H1 (cell line): ENCODE measurements at regions of chr11 and their contacts with region 1.

Region 1: GRCh38 chr11:113532697-113533424 is 57.7 kb upstream of the DRD2 start:
- DNase-seq: peak; percentile 44 to 91
- H3K4me3 ChIP-seq: no peak overlapping the region
- H3K27ac ChIP-seq: no peak overlapping the region
- H3K4me1 ChIP-seq: peaks cover 0 to under 1% (median 0%) of the 10 kb centered on the region in 4 experiments; a peak in 2 of 7 replicates
- H3K27me3 ChIP-seq: no peaks in the 10 kb centered on the region; a peak in 1 of 7 replicates
- CTCF ChIP-seq: peak; percentile 77 to 83 (median 78)
- EP300 ChIP-seq: no peak
- POLR2A ChIP-seq: no peak
- RAD21 ChIP-seq: peak; percentile 90

Region 2: DNA sequence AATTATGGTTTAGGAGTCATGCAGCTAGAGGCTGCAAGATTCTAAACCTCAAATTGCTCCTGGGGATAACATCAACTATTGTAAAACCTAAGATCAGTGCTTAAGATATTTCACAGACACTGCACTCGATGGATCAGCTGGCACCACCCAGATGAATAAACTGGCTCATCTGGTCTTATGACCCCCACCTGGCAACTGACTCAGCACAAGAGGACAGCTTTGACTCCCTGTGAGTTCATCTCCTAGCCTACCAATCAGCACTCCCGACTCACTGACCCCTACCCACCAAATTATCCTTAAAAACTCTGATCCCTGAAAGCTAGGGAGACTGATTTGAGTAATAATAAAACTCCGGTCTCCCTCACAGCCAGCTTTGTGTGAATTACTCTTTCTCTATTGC is 219.3 kb before region 1 on chr11:
- CTCF ChIA-PET with region 1: interaction called, 18 read pairs
- POLR2A ChIA-PET with region 1: no interaction called
- DNase-seq: no peak
- H3K4me3 ChIP-seq: peak overlapping the region in 2 of 4 experiments; percentile 24 to 79; a peak in 3 of 8 replicates
- H3K27ac ChIP-seq: no peak overlapping the region
- H3K4me1 ChIP-seq: peaks cover 0 to 13% (median 6%) of the 10 kb centered on the region in 4 experiments; a peak in 6 of 7 replicates
- H3K27me3 ChIP-seq: peaks cover 0 to 8% (median 3%) of the 10 kb centered on the region in 4 experiments; a peak in 1 of 7 replicates
- CTCF ChIP-seq: no peak
- EP300 ChIP-seq: no peak
- POLR2A ChIP-seq: no peak
- RAD21 ChIP-seq: no peak

Region 3: GRCh38 chr11:113519989-113520613 is 12.8 kb before region 1 on chr11:
- CTCF ChIA-PET with region 1: interaction called, 34 read pairs
- POLR2A ChIA-PET with region 1: no interaction called
- DNase-seq: no peak
- H3K4me3 ChIP-seq: no peak overlapping the region
- H3K27ac ChIP-seq: no peak overlapping the region
- H3K4me1 ChIP-seq: peaks cover 0 to 3% (median 0%) of the 10 kb centered on the region in 4 experiments; a peak in 1 of 7 replicates
- H3K27me3 ChIP-seq: no peaks in the 10 kb centered on the region
- CTCF ChIP-seq: no peak
- EP300 ChIP-seq: no peak
- POLR2A ChIP-seq: no peak
- RAD21 ChIP-seq: no peak

Region 4: DNA sequence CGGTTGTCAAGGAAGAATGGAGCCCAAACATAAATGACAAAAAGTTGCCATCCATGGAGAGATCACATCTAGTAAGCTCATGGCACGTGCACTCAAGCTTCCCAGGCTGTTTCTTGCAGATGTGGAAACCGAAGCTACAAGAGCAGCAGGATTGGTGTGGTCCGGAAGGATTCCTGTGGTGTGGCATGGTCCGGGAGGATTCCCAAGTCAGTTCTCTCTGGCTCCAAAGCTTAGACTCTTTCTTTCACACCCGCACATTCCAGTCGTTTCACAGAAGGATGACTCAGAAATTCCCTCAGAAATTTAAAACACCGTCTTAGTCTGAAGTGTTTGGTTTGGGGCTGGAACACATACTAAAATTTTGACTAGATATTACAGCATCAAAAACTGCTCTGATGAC is 20.4 kb after region 1 on chr11:
- CTCF ChIA-PET with region 1: interaction called, 70 read pairs
- POLR2A ChIA-PET with region 1: no interaction called
- DNase-seq: peak in 1 of 2 experiments; percentile 49
- H3K4me3 ChIP-seq: no peak overlapping the region
- H3K27ac ChIP-seq: no peak overlapping the region
- H3K4me1 ChIP-seq: peaks cover 0 to 7% (median 5%) of the 10 kb centered on the region in 4 experiments; a peak in 3 of 7 replicates
- H3K27me3 ChIP-seq: no peaks in the 10 kb centered on the region
- CTCF ChIP-seq: no peak
- EP300 ChIP-seq: no peak
- POLR2A ChIP-seq: no peak
- RAD21 ChIP-seq: no peak

Region 5: DNA sequence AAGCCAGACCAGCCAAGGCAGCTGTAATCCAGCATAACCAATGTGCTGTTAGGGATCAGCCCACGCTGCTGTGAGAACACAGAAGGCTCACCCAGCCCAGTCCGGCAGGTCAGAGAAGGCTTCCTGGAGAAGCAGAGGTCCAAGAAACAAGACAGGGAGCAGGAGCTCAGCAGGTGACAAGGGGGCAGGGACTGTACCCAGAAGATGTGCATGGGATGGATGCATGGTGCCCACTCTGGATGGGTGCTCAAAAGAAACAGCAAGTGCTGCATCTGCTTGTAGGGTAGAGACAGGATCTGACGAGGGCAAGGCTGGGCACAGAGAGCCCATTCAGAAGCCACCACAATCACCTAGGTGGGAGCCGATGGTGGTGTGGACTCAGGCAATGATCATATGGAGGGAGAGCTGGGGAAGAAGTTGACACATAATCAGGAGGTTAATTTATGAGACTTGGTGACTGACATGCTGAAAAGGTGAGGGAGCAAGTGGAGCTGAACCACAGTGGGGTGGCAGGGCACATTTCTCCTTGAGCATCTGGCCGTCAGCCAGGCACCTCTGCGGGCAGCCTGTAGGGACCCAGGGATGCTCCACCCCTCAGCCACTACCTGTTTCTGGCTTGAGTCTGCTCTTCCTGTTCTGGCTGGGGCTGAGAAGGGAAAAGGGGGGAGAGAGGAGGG is 44.6 kb after region 1 on chr11:
- CTCF ChIA-PET with region 1: interaction called, 12 read pairs
- POLR2A ChIA-PET with region 1: no interaction called
- DNase-seq: peak in 1 of 2 experiments; percentile 43
- H3K4me3 ChIP-seq: no peak overlapping the region
- H3K27ac ChIP-seq: no peak overlapping the region
- H3K4me1 ChIP-seq: peaks cover 5 to 24% (median 12%) of the 10 kb centered on the region in 4 experiments
- H3K27me3 ChIP-seq: no peaks in the 10 kb centered on the region
- CTCF ChIP-seq: no peak
- EP300 ChIP-seq: no peak
- POLR2A ChIP-seq: no peak
- RAD21 ChIP-seq: no peak

Region 6: DNA sequence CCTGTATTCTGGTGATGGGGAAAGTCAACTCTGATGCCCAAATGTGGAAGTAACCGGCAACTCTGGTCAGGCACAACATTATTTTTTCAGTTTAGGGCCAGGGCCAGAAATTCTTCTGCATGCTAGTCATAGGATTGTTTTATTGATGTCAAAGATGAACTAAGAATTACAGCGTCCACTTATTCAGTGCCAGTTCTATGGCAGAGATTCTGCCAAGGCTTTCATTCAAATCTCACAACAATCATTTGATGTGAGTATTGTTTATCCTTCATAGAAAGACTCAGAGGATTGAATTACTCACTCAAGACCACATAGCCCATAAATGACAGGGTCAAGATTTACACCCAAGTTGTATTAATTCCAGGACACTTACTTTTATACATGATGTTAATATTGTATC is 85.5 kb after region 1 on chr11:
- CTCF ChIA-PET with region 1: no interaction called
- POLR2A ChIA-PET with region 1: no interaction called
- DNase-seq: no peak
- H3K4me3 ChIP-seq: no peak overlapping the region
- H3K27ac ChIP-seq: no peak overlapping the region
- H3K4me1 ChIP-seq: no peaks in the 10 kb centered on the region
- H3K27me3 ChIP-seq: no peaks in the 10 kb centered on the region
- CTCF ChIP-seq: no peak
- EP300 ChIP-seq: no peak
- POLR2A ChIP-seq: no peak
- RAD21 ChIP-seq: no peak